AG04450 (cell line): ENCODE measurements at regions of chr12 and their contacts with region 1.

Region 1: GRCh38 chr12:93098077-93098476 is 169.0 kb upstream of the EEA1 start:
- DNase-seq: no peak
- H3K4me3 ChIP-seq: no peak overlapping the region
- H3K27ac ChIP-seq: no peak overlapping the region
- H3K27me3 ChIP-seq: no peaks in the 10 kb centered on the region
- CTCF ChIP-seq: peak; percentile 32

Region 2: GRCh38 chr12:93109551-93110203 is 11.6 kb after region 1 on chr12:
- CTCF ChIA-PET with region 1: interaction called, 12 read pairs
- POLR2A ChIA-PET with region 1: no interaction called
- DNase-seq: no peak
- H3K4me3 ChIP-seq: no peak overlapping the region
- H3K27ac ChIP-seq: no peak overlapping the region
- H3K27me3 ChIP-seq: no peaks in the 10 kb centered on the region
- CTCF ChIP-seq: no peak

Region 3: DNA sequence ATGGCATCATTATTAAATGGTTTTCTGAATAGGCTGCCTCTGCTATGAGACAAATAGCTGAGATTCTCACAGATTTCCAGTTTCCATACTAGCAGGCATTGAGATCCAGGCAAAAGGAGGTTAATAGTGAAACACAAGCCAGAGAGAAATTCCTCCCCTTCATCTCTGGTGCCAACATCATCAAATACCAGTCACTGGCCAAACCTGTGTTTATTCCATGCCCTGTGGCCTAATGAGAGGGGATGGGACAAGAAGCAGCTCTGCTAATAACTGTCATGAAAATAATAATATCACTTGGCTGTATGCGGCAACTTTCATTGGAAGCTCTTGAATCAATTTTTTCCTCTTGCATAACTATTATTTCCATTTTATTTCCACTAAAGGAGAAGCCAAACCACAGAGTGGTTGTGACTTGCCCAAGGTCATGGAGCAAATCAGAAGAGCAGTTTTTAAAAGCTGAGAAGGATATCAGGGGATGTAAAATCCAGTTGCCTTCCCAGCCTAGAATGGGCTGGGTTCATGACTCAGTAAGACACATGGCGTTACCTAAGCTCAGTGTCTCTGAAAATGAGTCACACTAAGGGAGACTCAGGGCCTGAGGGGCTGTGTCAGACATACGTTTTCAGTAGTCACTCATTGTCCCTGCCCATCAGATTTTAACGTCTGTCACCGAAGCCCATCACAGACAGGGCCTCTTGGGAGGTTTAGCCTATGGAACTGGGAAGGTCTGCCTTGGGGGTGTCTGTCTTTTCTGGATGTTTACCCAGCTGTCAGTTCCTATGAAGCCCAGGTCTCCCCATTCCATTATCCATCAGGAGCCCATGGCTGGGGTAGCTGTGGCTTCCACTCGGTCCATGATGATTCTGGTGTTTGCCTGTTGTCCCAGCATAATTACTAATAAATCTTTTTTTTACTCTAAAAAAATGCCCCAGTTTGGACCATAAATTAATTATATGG is 39.9 kb after region 1 on chr12:
- CTCF ChIA-PET with region 1: interaction called, 11 read pairs
- POLR2A ChIA-PET with region 1: no interaction called
- DNase-seq: no peak
- H3K4me3 ChIP-seq: no peak overlapping the region
- H3K27ac ChIP-seq: no peak overlapping the region
- H3K27me3 ChIP-seq: no peaks in the 10 kb centered on the region
- CTCF ChIP-seq: no peak